Psoas muscle (tissue), 8 donors: ENCODE measurements at regions of chr18 and their contacts with region 1.

Region 1: DNA sequence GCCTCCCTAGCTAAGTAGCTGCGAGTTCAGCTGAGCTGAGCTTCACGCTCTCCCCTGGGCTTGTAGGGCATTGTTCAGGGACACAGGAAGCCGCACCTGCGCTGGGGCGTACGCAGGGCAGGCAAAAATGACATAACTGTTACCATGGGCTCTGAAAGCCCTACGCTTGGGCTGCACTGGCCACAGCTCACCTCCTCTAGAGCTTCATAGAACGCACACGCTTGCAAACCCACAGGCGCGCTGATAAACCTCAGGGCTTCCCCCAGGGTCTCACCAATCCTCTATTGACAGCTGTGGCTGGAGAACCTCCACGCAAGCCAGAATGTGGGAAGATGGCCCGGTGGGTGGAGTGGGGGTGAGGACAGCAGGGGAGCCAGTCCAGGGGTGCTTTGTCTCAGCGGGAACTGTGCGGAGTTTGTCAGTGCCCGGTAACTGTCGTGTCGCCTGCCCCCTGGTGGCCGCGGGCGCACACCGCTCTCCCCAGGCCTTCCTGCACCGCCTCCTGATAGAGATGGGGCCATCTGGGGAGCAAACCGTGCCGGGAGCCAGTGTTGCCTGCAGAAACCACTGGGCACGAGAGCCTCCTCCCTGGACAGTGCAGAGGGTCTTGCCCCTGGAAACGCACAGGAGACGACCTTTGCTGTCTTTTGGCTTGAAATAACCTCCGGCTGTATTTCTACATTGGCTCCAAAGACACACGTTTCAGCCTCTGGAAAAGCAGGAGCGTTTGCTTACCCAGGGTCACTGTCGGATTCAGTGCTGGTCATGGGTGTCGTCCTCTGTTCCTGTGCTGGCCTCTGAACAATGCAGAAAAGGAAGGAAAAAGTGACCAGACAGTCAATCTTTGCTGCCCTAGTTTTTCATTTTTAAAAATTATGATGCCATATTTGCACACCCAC is 17.0 kb upstream of the CIDEA start:
- DNase-seq: peak; percentile 73 to 84
- ATAC-seq: peak; percentile 88 to 94 (median 91)
- H3K4me3 ChIP-seq: peak overlapping the region; percentile 28
- H3K27ac ChIP-seq: no peak overlapping the region
- H3K4me1 ChIP-seq: no peaks in the 10 kb centered on the region
- H3K27me3 ChIP-seq: peaks cover 0 to 7% (median 0%) of the 10 kb centered on the region in 3 donors
- CTCF ChIP-seq: peak; percentile 81

Region 2: DNA sequence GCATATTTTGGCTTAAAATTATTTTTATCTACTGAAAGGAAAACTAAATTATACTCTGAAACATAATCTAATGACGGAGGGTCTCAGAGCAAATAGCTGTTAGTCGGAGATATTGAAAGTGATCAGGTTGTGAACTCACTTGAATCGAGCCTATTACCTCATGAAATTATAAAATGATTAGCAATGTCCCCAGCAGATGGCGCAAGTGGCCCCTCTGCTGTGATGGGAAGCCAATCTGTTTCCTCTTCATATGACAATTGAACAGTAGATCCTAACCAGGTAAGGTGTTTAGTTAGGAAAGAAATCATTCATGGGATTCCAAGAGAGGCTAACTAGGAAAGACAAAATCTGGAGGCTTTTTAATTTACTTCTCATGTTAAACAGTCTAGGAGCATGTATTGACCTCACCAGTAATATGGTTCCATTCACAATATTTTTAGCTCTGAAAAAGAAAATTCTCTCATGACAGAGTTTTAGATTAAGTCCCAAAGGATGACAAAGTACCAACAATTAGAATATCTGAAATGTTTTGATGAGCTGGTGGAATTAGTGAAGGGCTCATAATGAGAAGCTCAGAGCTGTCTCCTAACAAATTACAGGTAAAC is 299.2 kb before region 1 on chr18:
- intact Hi-C with region 1: no loop called
- DNase-seq: peak; percentile 74 to 84
- ATAC-seq: peak; percentile 69 to 92 (median 82)
- H3K4me3 ChIP-seq: no peak overlapping the region
- H3K27ac ChIP-seq: no peak overlapping the region
- H3K4me1 ChIP-seq: no peaks in the 10 kb centered on the region
- H3K27me3 ChIP-seq: no peaks in the 10 kb centered on the region
- CTCF ChIP-seq: peak; percentile 92

Region 3: GRCh38 chr18:12049978-12050811 is 187.0 kb before region 1 on chr18:
- intact Hi-C with region 1: loop called in 1 of 2 experiments (anchors 10 kb)
- DNase-seq: no peak
- ATAC-seq: no peak
- H3K4me3 ChIP-seq: no peak overlapping the region
- H3K27ac ChIP-seq: no peak overlapping the region
- H3K4me1 ChIP-seq: no peaks in the 10 kb centered on the region
- H3K27me3 ChIP-seq: no peaks in the 10 kb centered on the region
- CTCF ChIP-seq: no peak

Region 4: GRCh38 chr18:12074736-12075135 is 162.4 kb before region 1 on chr18:
- intact Hi-C with region 1: loop called in 1 of 2 experiments (anchors 5 kb)
- DNase-seq: no peak
- ATAC-seq: no peak
- H3K4me3 ChIP-seq: no peak overlapping the region
- H3K27ac ChIP-seq: no peak overlapping the region
- H3K4me1 ChIP-seq: no peaks in the 10 kb centered on the region
- H3K27me3 ChIP-seq: no peaks in the 10 kb centered on the region
- CTCF ChIP-seq: peak; percentile 12

Region 5: GRCh38 chr18:12086237-12086637 is 150.9 kb before region 1 on chr18:
- intact Hi-C with region 1: loop called in 1 of 2 experiments (anchors 5 kb)
- DNase-seq: no peak
- ATAC-seq: peak in 2 of 4 donors; percentile 6 to 22
- H3K4me3 ChIP-seq: no peak overlapping the region
- H3K27ac ChIP-seq: no peak overlapping the region
- H3K4me1 ChIP-seq: no peaks in the 10 kb centered on the region
- H3K27me3 ChIP-seq: no peaks in the 10 kb centered on the region
- CTCF ChIP-seq: no peak